ENCODE measurements at regions of chr16 and their contacts with region 1.

Region 1: GRCh38 chr16:30091474-30092372 is at the start of gene TBX6:
- DNase-seq: peak; percentile 94 to 98 (median 95)
- ATAC-seq: peak; percentile 83 to 91 (median 90)
- H3K4me3 ChIP-seq: peak within 1 kb of the TSS; percentile 24 to 66 (median 56)
- H3K27ac ChIP-seq: peak within 1 kb of the TSS; percentile 34 to 95 (median 88)
- H3K4me1 ChIP-seq: peaks cover 4 to 69% (median 41%) of the 10 kb centered on the region in 12 donors
- H3K27me3 ChIP-seq: no peaks in the 10 kb centered on the region
- CTCF ChIP-seq: peak; percentile 63 to 95 (median 72)
- POLR2A ChIP-seq: peak in 1 of 2 donors; percentile 51
- total RNA-seq, gene TBX6: 0.39 to 0.95 (median 0.72) TPM in 8 of 9 donors, not detected in the other

Region 2: GRCh38 chr16:30032083-30032819 is 59.5 kb before region 1 on chr16:
- intact Hi-C with region 1: loop called in 1 of 10 experiments (anchors 10 kb)
- DNase-seq: no peak
- ATAC-seq: peak in 1 of 4 donors; percentile 29
- H3K4me3 ChIP-seq: no peak overlapping the region
- H3K27ac ChIP-seq: no peak overlapping the region
- H3K4me1 ChIP-seq: peaks cover 0 to 11% (median 0%) of the 10 kb centered on the region in 12 donors
- H3K27me3 ChIP-seq: peaks cover 25 to 86% (median 67%) of the 10 kb centered on the region in 9 donors
- CTCF ChIP-seq: peak; percentile 38 to 63 (median 54)
- POLR2A ChIP-seq: no peak

Region 3: DNA sequence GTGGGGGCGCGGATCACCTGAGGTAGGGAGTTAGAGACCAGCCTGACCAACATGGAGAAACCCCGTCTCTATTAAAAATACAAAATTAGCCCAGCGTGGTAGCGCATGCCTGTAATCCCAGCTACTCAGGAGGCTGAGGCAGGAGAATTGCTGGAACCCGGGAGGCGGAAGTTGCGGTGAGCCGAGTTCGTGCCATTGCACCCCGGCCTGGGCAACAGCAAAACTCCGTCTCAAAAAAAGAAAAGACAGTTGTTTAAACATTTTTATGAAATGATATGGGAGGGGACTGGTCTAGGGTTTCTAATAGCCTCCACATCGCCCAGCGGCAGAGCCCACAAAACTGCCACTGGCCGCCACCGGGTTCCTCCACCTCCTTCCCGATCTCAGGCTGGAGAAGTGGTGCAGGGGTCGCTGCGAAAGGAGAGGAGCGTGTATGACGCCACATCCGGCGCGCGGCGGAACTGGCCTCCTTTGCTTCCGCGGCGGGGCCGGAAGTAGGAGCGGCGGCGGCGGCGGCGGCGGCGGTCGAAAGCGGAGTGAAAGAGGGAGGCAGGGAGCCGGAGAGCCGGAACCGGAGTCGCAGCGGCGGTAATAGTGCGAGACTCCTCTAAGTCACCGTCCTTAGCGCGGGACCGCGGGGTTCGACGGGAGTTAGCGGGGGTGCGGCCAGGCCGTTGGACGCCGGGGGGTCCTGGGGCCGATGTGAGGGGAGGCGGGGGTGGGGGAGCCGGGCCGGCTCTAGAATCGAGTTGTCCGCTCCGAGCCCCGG is 16.0 kb before region 1 on chr16 and contains the start of gene PPP4C:
- intact Hi-C with region 1: loop called in 1 of 10 experiments (anchors 2 kb)
- DNase-seq: peak; percentile 93 to 96 (median 94)
- ATAC-seq: peak; percentile 84 to 96 (median 92)
- H3K4me3 ChIP-seq: peak within 1 kb of the TSS; percentile 91 to 100 (median 97)
- H3K27ac ChIP-seq: peak within 1 kb of the TSS; percentile 72 to 97 (median 94)
- H3K4me1 ChIP-seq: peaks cover 0 to 53% (median 32%) of the 10 kb centered on the region in 12 donors
- H3K27me3 ChIP-seq: no peaks in the 10 kb centered on the region
- CTCF ChIP-seq: peak in 5 of 12 donors; percentile 9 to 42 (median 24)
- POLR2A ChIP-seq: peak in 1 of 2 donors; percentile 76
- total RNA-seq, gene PPP4C: 29.9 to 65.9 (median 41.1) TPM

Region 4: DNA sequence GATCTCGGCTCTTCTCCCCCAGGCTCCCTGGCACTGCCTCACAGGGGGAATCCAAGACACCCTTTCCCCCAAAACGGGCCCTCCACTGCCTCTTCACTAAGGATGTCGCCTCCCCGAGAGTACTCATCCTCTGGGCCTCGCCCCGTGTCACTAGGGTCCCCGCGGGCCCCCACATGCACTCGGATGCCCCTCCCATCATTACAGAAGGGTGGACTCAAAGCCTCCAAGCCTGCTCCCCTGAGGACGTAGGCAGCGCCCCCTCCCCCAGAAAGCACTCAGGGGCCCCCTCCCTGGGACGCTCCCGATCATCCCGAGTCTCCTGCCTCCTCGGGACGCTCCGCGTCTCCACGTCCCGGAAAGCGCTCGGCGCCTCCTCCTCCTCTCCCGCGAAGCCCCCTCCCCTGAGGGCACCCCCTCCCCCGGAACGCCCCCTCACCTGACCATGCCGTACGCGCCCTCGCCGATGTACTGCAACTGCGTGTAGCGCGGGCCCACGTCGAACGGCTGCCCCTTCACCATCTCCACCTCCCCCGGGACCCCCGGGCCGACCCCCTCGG is 31.0 kb after region 1 on chr16:
- intact Hi-C with region 1: loop called in 2 of 10 experiments (anchors 1 to 2 kb)
- DNase-seq: peak in 2 of 5 donors; percentile 47 to 64
- ATAC-seq: peak in 3 of 4 donors; percentile 15 to 38 (median 17)
- H3K4me3 ChIP-seq: peak overlapping the region; percentile 64 to 96 (median 81)
- H3K27ac ChIP-seq: peak overlapping the region; percentile 87 to 99 (median 95)
- H3K4me1 ChIP-seq: peaks cover 0 to 41% (median 15%) of the 10 kb centered on the region in 12 donors
- H3K27me3 ChIP-seq: no peaks in the 10 kb centered on the region
- CTCF ChIP-seq: no peak
- POLR2A ChIP-seq: no peak

Region 5: GRCh38 chr16:30142672-30143346 is 51.1 kb after region 1 on chr16:
- intact Hi-C with region 1: no loop called
- DNase-seq: no peak
- ATAC-seq: no peak
- H3K4me3 ChIP-seq: no peak overlapping the region
- H3K27ac ChIP-seq: no peak overlapping the region
- H3K4me1 ChIP-seq: peaks cover 0 to 21% (median 0%) of the 10 kb centered on the region in 12 donors
- H3K27me3 ChIP-seq: no peaks in the 10 kb centered on the region
- CTCF ChIP-seq: peak in 2 of 12 donors; percentile 9
- POLR2A ChIP-seq: no peak

Region 6: DNA sequence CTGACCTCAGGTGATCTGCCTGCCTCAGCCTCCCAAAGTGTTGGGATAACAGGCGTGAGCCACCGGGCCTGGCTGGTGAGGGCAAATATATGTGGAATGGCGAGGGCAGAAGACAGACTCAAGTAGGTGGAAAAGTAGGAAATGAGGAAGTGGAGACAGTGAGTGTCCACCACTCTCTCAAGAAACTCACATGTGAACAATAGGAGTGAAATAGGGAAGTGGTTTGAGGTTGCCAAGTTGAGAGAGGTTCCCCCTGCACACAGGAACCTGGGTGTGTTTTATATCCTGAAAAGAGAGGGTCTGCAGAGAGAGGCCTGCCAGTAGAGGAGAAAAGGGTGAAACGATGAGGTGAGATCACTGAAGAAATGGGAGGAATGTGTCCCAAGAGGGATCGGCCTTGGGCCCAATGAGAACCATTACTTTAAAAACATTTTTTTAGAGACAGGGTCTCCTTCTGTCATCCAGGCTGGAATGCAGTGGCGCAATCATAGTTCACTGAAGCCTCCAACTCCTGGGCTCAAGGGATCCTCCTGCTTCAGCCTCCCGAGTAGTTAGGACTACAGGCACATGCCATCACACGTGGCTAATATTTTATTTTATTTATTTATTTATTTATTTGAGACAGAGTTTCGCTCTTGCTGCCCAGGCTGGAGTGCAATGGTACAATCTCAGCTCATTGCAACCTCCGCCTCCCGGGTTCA is 74.6 kb after region 1 on chr16:
- intact Hi-C with region 1: no loop called
- DNase-seq: no peak
- ATAC-seq: peak in 2 of 4 donors; percentile 59 to 84
- H3K4me3 ChIP-seq: no peak overlapping the region
- H3K27ac ChIP-seq: peak overlapping the region in 1 of 12 donors; percentile 50
- H3K4me1 ChIP-seq: peaks cover 0 to 14% (median 0%) of the 10 kb centered on the region in 12 donors
- H3K27me3 ChIP-seq: no peaks in the 10 kb centered on the region
- CTCF ChIP-seq: no peak
- POLR2A ChIP-seq: no peak

Region 7: DNA sequence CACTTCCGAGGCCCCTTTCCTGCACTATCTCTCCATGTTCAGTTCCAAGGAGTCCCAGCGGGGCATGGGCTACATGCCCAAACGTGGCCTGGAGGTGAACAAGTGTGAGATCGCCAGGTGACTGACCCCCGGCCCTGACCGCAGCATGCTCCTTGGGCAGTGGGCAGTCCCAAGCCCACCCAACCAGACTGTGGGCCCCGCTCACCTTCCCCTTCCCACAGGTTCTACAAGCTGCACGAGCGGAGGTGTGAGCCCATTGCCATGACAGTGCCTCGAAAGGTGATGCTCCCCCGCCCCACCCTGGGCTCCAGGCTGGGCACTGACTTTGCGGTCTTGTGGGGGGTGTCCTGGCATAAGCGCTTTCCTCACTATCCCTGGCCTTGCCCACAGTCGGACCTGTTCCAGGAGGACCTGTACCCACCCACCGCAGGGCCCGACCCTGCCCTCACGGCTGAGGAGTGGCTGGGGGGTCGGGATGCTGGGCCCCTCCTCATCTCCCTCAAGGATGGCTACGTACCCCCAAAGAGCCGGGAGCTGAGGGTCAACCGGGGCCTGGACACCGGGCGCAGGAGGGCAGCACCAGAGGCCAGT is 96.3 kb after region 1 on chr16:
- intact Hi-C with region 1: no loop called
- DNase-seq: peak in 1 of 5 donors; percentile 62
- ATAC-seq: no peak
- H3K4me3 ChIP-seq: peak overlapping the region in 1 of 12 donors; percentile 73
- H3K27ac ChIP-seq: peak overlapping the region in 1 of 12 donors; percentile 91
- H3K4me1 ChIP-seq: peaks cover 0 to 31% (median 9%) of the 10 kb centered on the region in 12 donors
- H3K27me3 ChIP-seq: no peaks in the 10 kb centered on the region
- CTCF ChIP-seq: no peak
- POLR2A ChIP-seq: no peak

Region 8: DNA sequence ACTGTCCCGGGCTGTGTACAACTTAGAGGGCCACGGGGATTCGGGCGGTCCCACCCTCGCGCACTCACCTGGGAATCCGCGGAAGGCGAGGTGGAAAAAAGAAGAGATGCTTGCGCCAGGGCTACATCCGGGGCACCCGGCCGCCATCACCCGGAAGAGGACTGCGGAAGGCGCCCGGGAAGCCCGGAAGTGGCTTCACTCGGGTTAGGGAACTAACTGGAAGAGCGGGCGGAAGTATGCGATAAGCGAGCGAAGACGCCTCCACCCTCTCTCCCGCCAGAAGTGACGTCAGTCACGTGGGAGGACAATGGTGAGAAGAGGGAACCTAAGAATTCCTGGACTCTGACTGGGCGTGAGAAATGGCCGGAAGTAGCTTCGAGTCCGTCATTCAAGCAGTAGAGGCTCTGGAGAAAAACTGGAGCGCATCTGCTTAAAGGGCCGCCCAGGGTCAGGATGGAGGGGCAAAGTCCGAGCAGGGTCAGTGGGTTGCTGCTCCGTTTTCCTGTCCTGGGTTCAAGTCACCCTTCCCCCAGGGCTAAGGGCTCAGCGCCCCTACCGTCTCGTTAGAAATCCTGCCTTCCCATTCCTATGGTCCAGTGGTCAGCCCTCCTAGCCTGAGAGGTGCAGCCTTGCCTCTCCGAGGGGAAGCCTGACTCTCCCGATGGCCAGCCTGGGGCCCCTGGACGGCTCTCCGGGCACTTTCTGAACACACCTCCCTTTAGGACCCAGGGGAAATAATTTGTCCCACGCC is 263.6 kb after region 1 on chr16 and contains the start of gene CD2BP2:
- intact Hi-C with region 1: loop called in 1 of 10 experiments (anchors 10 kb)
- DNase-seq: peak; percentile 95 to 98 (median 97)
- ATAC-seq: peak; percentile 89 to 96 (median 92)
- H3K4me3 ChIP-seq: peak within 1 kb of the TSS; percentile 68 to 99 (median 85)
- H3K27ac ChIP-seq: peak within 1 kb of the TSS; percentile 91 to 99 (median 94)
- H3K4me1 ChIP-seq: peaks cover 12 to 47% (median 37%) of the 10 kb centered on the region in 12 donors
- H3K27me3 ChIP-seq: no peaks in the 10 kb centered on the region
- CTCF ChIP-seq: peak in 1 of 12 donors; percentile 9
- POLR2A ChIP-seq: peak in 1 of 2 donors; percentile 40
- total RNA-seq, gene CD2BP2: 21.5 to 54.5 (median 39.8) TPM

Region 9: DNA sequence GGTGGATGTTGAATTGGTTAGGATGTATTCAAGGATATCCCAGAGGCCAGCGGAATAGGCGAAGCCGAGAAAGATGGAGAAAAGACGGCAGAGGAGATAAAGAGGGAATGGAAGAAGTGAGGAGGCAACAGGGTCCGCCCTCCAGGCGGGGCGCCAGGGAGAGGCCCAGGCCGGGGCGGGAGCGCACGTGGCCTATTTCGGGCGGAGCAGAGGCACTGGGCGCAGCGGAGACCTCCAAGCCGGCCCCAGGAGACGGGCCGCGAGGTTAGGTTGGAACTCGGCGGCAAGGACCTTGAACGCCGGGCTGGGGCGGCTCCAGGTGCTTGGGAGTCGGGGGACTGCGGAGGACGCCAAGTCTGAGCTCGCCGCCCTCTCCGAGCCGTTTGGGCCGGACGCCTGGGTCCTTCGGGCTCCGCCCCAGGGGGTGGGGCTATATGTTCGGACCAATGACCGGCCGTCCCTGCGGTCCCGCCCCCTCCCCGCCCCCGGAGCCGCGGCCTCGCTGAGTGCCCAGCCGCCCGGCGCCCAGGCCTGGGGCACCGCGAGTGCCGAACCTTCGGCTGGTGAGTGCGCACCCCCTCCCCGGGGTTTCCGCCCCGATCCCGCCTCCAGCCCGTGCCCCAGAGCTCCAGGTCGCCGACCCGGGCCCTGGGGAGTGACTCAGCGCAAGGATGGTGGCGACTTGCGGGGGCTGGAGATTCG is 315.5 kb after region 1 on chr16 and contains the start of gene ZNF771:
- intact Hi-C with region 1: loop called in 5 of 10 experiments (anchors 5 to 10 kb)
- DNase-seq: peak; percentile 94 to 97 (median 94)
- ATAC-seq: peak; percentile 83 to 97 (median 96)
- H3K4me3 ChIP-seq: peak within 1 kb of the TSS; percentile 54 to 96 (median 76)
- H3K27ac ChIP-seq: peak within 1 kb of the TSS; percentile 61 to 93 (median 85)
- H3K4me1 ChIP-seq: peaks cover 0 to 33% (median 17%) of the 10 kb centered on the region in 12 donors
- H3K27me3 ChIP-seq: no peaks in the 10 kb centered on the region
- CTCF ChIP-seq: peak in 3 of 12 donors; percentile 15 to 18 (median 15)
- POLR2A ChIP-seq: peak in 1 of 2 donors; percentile 59
- total RNA-seq, gene ZNF771: 4.8 to 18.8 (median 6.8) TPM

Region 10: DNA sequence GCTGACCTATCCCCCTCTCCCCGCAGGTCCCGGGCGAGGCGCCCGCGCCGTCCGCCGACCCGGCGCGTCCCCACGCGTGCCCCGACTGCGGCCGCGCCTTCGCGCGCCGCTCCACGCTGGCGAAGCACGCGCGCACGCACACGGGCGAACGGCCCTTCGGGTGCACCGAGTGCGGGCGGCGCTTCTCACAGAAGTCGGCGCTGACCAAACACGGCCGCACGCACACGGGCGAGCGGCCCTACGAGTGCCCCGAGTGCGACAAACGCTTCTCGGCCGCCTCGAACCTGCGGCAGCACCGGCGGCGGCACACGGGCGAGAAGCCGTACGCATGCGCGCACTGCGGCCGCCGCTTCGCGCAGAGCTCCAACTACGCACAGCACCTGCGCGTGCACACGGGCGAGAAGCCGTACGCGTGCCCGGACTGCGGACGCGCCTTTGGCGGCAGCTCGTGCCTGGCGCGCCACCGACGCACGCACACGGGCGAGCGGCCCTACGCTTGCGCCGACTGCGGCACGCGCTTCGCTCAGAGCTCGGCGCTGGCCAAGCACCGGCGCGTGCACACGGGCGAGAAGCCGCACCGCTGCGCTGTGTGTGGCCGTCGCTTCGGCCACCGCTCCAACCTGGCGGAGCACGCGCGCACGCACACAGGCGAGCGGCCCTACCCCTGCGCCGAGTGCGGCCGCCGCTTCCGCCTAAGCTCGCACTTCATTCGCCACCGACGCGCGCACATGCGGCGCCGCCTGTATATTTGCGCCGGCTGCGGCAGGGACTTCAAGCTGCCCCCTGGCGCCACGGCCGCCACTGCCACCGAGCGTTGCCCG is 326.0 kb after region 1 on chr16:
- intact Hi-C with region 1: loop called in 2 of 10 experiments (anchors 10 kb)
- DNase-seq: peak; percentile 84 to 93 (median 87)
- ATAC-seq: peak; percentile 89 to 96 (median 92)
- H3K4me3 ChIP-seq: peak overlapping the region; percentile 38 to 76 (median 64)
- H3K27ac ChIP-seq: peak overlapping the region; percentile 14 to 91 (median 77)
- H3K4me1 ChIP-seq: peaks cover 0 to 27% (median 10%) of the 10 kb centered on the region in 12 donors
- H3K27me3 ChIP-seq: no peaks in the 10 kb centered on the region
- CTCF ChIP-seq: peak in 7 of 12 donors; percentile 12 to 46 (median 28)
- POLR2A ChIP-seq: peak in 1 of 2 donors; percentile 45

Measured in heart left ventricle (tissue), 16 donors.